Activated T-helper 1 cell treated with anti-CD3 and anti-CD28 coated beads, Interleukin-12 subunit alpha, Interleukin-12 subunit beta, Interleukin-2, Interleukin-4 antibody, amounts not matched to agents 30 ng/mL and 10 ng/mL and 1 ng/mL, durations not matched to agents 14 hours and 24 hours and 36 hours (primary cell): ENCODE measurements at regions of chr17 and their contacts with region 1.

Region 1: DNA sequence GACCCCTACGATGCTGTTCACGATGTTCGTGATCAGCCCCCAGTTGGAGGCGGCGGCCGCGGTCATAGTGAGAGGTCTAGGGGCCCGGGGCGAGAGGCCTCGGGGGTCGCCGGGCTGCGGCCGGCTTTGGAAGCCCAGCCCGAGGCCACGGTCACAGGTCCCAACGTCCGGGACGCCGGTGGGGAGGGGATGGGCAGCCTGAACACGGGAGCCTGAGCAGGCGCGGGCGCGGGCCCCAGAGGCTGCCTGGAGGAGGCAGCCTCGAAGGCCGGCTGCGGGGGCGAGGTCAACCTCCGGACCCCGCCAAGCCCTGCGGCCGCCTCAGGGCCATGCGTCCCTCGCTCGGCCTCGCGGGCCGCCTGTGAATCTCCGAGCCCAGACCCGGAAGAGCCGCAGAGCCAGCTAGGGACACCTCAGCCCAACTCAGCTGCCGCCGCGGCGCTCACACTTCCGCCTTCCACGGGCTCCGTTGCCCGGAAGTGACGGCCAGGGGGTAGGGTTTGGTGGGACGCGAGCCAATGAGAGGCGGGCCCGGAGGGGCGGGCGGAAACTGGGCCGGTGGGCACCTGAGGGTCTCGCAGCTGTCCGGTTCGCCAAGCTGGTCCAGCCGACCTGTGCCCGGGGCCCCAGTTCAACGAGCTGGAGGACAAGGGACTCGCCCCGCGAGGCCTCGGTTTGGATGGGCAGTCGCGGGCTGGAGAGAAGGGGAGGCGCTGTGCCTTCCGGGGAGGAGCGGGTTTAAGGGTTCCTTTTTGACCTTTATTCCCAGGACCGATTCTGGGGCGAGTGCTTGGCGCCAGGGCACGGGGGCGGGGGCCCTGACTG is at the start of gene SLC38A10:
- DNase-seq: peak; percentile 92
- H3K4me3 Mint-ChIP-seq: peak within 1 kb of the TSS; percentile 92
- H3K27ac Mint-ChIP-seq: peak within 1 kb of the TSS; percentile 90
- H3K4me1 Mint-ChIP-seq: peaks cover 27% of the 10 kb centered on the region
- H3K27me3 Mint-ChIP-seq: no peaks in the 10 kb centered on the region
- total RNA-seq, gene SLC38A10: 99.7 and 101 TPM in 2 replicates

Region 2: GRCh38 chr17:80414803-80415625 is 880.1 kb before region 1 on chr17 and contains the start of gene ENDOV:
- intact Hi-C with region 1: no loop called
- DNase-seq: peak; percentile 90
- H3K4me3 Mint-ChIP-seq: peak within 1 kb of the TSS; percentile 87
- H3K27ac Mint-ChIP-seq: peak within 1 kb of the TSS; percentile 65
- H3K4me1 Mint-ChIP-seq: peaks cover 18% of the 10 kb centered on the region
- H3K27me3 Mint-ChIP-seq: peaks cover 16% of the 10 kb centered on the region
- total RNA-seq, gene ENDOV: 15.6 and 16.9 TPM in 2 replicates

Region 3: DNA sequence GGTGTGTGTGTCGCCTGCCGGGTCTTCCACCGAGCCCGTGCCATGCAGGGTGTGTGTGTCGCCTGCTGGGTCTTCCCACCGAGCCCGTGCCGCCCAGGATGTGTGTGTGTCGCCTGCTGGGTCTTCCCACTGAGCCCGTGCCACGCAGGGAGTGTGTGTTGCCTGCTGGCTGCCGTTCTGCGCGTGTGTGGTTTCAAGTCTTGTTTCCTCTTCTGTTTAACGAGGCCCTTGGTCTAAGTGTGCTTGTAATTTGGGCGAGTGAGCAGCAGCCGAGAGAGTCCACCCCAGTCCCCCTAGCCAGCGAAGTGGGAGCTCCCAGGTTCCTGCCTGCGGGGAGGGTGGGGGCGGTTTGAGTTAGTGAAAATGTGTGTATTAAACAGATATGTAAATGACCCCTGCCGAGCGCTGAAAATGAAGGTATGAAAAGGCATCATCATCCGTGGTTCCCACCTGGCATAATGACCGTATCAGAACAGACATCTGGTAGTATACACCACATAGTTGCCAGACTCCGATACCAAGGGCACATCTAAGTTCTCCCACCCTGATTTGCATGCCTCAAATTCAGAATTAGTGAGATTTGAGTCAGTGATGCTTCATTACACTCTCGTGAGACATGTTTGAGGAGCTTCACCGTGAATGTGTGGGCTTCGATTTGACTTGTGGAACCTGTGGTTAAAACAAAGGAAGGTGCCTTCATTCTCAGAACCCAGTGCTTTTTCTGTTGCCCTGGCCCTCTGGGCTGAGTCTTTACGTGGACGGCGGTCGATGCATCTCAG is 417.9 kb before region 1 on chr17:
- intact Hi-C with region 1: loop called (anchors 5 kb)
- DNase-seq: peak; percentile 64
- H3K4me3 Mint-ChIP-seq: peak overlapping the region; percentile 65
- H3K27ac Mint-ChIP-seq: peak overlapping the region; percentile 96
- H3K4me1 Mint-ChIP-seq: peaks cover 55% of the 10 kb centered on the region
- H3K27me3 Mint-ChIP-seq: no peaks in the 10 kb centered on the region

Region 4: GRCh38 chr17:81119223-81120148 is 175.6 kb before region 1 on chr17:
- intact Hi-C with region 1: no loop called
- DNase-seq: peak; percentile 88
- H3K4me3 Mint-ChIP-seq: peak overlapping the region; percentile 72
- H3K27ac Mint-ChIP-seq: peak overlapping the region; percentile 84
- H3K4me1 Mint-ChIP-seq: no peaks in the 10 kb centered on the region
- H3K27me3 Mint-ChIP-seq: no peaks in the 10 kb centered on the region

Region 5: DNA sequence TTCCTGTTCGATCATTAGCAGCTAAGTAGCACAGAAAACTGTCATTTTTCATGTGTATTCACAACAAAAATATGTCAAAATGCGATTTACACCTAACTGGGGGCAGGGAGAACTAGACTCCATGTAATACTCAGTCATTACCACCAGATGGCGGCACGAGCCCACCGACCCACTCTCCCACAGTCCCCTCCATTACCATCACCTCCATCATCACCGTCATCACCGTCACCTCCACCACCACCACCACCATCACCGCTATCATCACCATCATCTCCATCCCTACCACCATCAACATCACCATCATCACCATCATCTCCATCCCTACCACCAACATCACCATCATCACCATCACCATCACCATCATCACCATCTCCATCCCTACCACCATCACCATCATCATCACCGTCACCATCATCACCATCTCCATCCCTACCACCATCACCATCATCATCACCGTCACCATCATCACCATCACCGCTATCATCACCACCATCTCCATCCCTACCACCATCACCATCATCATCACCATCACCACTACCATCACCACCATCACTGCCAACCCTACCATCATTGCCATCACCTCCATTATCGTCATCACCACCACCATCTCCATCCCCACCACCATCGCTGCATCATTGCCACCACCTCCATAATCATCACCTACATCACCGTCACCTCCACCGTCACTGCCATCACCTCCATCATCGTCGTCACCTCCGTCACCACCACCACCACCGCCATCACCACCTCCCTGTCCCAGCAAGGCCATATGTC is 41.5 kb before region 1 on chr17:
- intact Hi-C with region 1: loop called (anchors 1 kb)
- DNase-seq: peak; percentile 38
- H3K4me3 Mint-ChIP-seq: no peak overlapping the region
- H3K27ac Mint-ChIP-seq: peak overlapping the region; percentile 14
- H3K4me1 Mint-ChIP-seq: no peaks in the 10 kb centered on the region
- H3K27me3 Mint-ChIP-seq: no peaks in the 10 kb centered on the region

Region 6: DNA sequence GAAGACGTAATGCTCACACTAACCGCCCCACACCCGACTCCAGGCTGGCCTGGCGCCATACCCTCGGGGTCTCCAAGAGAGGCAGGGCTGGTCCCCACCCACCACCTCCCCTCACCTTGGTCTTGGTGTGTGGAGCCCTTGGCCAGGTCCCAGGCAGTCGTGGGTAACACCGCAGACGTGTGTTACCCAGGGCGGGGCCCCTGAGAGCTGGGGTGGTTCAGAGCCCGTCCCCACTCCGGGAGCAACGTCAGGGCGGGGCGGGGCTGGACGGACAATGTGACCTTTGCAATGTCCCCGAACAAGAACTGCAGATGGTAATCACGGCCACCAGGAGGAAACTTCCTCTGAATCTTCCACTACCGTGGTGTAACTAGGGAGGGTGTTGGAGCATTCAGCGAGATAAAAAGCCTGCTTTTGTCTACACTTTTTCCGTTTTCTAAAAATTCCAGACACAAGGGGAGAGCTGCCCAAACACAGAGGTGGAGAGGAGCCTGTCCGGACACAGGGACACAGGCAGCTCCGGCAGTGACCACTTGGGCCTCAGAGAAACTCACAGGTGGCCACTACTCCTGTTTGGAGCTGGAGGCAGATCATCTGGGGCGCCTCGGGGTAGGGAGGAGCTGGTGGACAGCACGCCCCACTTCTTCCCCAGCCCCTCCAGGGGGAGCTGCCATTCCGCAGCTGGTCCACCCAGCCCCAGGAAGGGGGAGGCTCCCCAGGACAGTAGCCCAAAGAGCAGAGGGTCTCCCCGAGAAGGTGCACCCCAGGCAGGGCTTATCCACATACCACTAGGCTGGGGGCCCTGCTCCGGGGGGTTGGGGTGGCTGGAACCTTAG is 14.2 kb after region 1 on chr17:
- intact Hi-C with region 1: loop called (anchors 1 kb)
- DNase-seq: peak; percentile 9
- H3K4me3 Mint-ChIP-seq: no peak overlapping the region
- H3K27ac Mint-ChIP-seq: no peak overlapping the region
- H3K4me1 Mint-ChIP-seq: no peaks in the 10 kb centered on the region
- H3K27me3 Mint-ChIP-seq: peaks cover 6% of the 10 kb centered on the region

Region 7: GRCh38 chr17:81365148-81365600 is 70.1 kb after region 1 on chr17:
- intact Hi-C with region 1: no loop called
- DNase-seq: no peak
- H3K4me3 Mint-ChIP-seq: no peak overlapping the region
- H3K27ac Mint-ChIP-seq: no peak overlapping the region
- H3K4me1 Mint-ChIP-seq: no peaks in the 10 kb centered on the region
- H3K27me3 Mint-ChIP-seq: peaks cover 22% of the 10 kb centered on the region

Region 8: DNA sequence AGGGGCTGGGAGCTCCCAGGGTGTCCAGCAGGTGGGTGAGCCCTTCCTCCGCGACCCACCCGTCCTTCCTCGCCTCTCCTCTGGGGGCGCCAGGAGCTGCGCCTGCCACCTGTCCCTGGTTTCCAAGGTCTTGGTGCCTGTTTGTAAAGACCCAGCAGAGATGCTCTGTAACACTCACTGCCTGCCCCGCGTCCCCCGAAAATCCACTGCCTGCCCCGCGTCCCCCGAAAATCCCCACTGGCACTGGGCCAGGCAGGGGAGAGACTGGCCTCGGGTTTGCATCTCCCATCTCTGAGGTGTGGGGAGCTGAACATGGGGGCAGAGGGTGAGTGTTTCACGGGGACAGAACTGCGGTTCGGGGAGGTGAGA is 145.8 kb after region 1 on chr17:
- intact Hi-C with region 1: no loop called
- DNase-seq: no peak
- H3K4me3 Mint-ChIP-seq: no peak overlapping the region
- H3K27ac Mint-ChIP-seq: no peak overlapping the region
- H3K4me1 Mint-ChIP-seq: no peaks in the 10 kb centered on the region
- H3K27me3 Mint-ChIP-seq: no peaks in the 10 kb centered on the region

Region 9: GRCh38 chr17:81484195-81484979 is 189.3 kb after region 1 on chr17:
- intact Hi-C with region 1: loop called (anchors 1 kb)
- DNase-seq: peak; percentile 86
- H3K4me3 Mint-ChIP-seq: no peak overlapping the region
- H3K27ac Mint-ChIP-seq: no peak overlapping the region
- H3K4me1 Mint-ChIP-seq: no peaks in the 10 kb centered on the region
- H3K27me3 Mint-ChIP-seq: peaks cover 30% of the 10 kb centered on the region